ENCODE measurements at regions of chr15 and their contacts with region 1.

Region 1: DNA sequence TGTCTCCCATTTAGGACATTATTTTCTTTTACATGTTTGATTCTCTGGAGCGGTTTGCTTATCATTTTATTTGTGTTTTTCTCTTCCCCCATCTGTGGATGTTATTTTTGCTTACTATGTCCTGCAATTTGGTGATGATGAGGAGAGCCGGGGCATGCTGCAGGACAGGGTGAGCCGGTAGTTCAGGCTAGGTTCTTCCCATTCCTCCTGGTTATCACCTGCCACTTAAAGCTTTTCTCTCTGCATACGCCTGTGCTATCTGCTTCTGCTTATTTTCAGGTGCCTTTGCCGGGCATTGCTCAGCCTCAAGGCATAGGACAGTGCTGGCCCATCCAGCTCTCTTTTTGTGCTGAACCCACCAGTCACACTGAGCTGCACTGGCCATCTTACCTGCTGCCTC is 85.8 kb downstream of the MCTP2 start:
- DNase-seq: no peak

Region 2: GRCh38 chr15:93460717-93461116 is 856.5 kb before region 1 on chr15:
- intact Hi-C with region 1: no loop called
- DNase-seq: no peak

Region 3: DNA sequence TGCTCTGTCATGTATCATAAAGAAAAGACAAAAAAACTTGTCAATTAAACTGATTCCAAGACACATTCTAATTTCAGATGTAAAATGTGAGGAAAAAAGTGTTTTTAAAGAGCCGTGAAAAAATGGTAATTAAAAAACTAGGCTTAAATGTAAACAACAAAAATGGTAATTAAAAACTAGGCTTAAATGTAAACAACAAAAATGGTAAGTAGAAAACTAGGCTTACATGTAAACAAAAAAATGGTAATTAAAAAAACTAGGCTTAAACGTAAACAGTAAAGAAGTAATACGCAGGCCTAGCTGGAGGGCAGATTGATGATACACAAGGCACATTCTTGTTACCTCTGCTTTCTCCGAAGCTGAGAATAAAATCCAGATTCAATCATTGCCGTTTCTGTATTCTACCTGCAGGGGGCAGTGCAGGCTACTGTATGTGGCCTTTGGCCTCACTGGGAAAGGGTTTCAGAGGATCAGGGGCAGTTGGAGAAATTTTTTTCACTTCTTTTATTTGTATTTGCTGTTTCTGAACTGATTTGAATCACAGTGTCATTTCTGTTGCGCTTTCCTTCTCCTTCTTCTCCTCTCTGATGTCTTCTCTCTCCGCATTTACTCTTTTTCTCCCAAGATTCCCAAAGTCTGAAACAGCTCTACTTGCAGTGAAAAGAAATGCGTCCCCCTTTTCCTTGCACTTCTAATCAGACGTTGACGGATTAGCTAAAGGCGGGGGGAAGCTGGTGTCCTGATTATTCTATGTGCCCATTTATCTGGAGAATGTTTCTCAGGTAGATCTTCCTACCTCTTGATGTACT is 153.0 kb before region 1 on chr15:
- intact Hi-C with region 1: loop called in 1 of 2 experiments (anchors 10 kb)
- DNase-seq: no peak

Region 4: GRCh38 chr15:94282269-94283250 is 34.6 kb before region 1 on chr15:
- intact Hi-C with region 1: no loop called
- DNase-seq: no peak